PC-9 (cell line): ENCODE measurements at regions of chr19 and their contacts with region 1.

Region 1: DNA sequence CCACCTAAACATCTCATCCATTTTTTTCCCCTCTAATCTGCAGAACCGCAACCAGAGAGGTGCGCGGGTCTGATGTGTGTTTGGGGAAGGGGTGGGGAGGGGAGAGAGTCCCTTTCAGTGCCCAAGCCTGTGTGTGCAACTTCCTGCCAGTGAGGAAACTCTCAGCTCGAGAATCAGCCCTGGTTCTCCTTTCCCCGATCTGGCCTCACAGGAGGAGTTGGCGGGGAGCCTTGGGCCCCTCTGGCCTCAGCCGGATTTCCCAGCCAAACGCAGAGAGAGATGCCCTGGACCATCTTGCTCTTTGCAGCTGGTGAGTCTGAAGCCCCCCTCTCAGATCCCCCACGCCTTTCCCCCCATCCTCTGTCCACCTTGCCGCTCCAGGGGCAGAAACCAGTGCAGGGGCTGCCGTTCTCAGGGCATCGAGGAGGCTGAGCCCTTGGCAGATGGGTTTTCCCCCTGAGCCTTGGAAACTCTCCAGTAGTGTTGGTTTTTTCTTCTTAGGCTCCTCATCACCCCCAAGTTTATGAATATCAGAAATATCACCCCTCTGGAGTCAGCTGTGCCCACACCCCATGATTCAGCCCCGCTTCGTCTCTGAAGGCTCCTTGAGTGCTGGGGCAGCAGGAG is at the start of gene C19orf38:
- DNase-seq: peak in 1 of 2 experiments; percentile 21
- H3K4me3 ChIP-seq: no peak within 1 kb of the TSS
- H3K27ac ChIP-seq: no peak within 1 kb of the TSS
- H3K4me1 ChIP-seq: no peaks in the 10 kb centered on the region
- H3K27me3 ChIP-seq: no peaks in the 10 kb centered on the region
- CTCF ChIP-seq: no peak
- total RNA-seq, gene C19orf38: 0.59 and 1.4 TPM in 2 replicates

Region 2: DNA sequence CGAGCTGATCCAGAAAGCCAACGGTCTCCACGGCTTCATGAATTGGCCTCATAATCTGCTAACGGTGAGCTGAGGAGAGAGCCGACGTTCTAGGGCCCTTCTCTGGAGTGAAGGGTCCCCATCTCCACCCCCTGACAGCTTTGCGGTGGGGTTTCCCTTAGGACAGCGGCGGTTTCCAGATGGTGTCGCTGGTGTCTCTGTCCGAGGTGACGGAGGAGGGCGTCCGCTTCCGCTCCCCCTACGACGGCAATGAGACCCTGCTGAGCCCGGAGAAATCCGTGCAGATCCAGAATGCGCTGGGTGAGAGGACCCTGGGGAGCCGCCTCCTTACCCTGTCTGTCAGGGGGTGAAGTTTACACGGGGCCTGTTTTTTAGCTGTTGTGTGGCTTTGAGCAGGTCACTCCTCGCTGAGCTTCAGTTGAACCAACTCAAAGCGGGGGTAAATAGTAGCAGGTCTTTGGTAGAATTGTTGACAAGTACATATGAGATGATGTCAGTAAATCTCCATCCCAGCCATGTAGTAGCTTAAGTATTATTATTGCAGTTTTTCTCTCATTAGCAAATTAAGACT is 146.3 kb before region 1 on chr19:
- CTCF ChIA-PET with region 1: interaction called, 11 read pairs
- POLR2A ChIA-PET with region 1: no interaction called
- intact Hi-C with region 1: no loop called
- DNase-seq: no peak
- H3K4me3 ChIP-seq: peak overlapping the region; percentile 100
- H3K27ac ChIP-seq: no peak overlapping the region
- H3K4me1 ChIP-seq: peaks cover 14% of the 10 kb centered on the region
- H3K27me3 ChIP-seq: 0 out of 2 replicates have a peak, but pooled peaks cover 11% of the 10 kb centered on the region
- CTCF ChIP-seq: no peak